ENCODE measurements at regions of chr17 and their contacts with region 1.

Region 1: DNA sequence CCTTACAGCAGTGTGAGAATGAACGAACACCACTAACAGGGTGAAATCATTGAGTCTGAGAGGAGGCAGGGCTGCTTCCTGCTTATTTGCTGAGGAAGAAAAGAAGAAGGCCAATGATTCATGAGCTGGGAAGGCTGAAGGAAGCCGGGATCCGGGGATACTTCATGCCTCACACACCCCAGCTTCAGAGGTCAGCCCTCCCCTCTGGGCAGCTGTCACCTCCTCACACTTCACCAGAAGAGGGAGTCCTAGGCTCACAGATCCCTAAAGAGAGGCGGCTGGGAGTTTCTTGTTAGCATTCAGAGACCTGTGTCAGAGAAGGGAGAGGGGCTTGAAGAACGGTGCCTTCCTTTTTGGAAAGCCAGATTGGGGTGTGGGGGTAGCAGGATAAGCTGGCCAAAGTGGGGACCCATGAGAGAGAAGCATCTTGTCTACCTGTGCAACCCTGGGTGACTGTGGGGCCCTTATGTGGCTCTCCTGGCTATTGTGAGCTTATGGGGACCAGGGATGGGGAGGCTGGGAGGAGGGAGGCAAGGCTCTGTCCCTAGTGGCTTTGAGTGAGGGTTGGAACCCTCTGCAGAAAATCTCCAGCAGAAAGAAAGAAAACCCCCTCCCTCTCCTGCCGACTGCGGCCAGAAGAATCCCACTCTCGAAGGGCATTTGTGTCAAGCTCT is 94.6 kb downstream of the RGS9 start:
- ATAC-seq: peak; percentile 70 to 92 (median 81)
- H3K4me3 ChIP-seq: no peak overlapping the region
- H3K27ac ChIP-seq: no peak overlapping the region
- H3K4me1 ChIP-seq: peaks cover 10 to 12% of the 10 kb centered on the region in 2 donors

Region 2: DNA sequence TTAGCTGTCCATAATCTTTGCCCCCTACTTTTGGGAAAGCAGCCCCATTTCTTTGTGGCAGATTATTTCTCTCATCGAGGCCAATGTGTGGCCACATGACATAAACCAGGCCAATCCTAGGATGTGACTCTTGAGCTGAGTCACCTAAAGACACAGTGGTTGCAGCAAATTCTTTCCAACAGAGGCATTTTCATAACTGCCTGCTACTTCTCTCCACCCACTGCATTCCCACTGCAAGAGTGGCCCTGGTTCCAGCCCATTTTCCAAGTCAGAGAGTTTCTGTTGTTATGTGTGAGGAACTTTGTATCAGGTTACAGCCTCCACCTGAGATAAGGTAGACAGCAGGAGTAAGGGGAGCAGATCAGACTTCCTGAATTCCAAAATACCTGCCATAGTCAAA is 100.6 kb after region 1 on chr17:
- in situ Hi-C with region 1: no loop called
- ATAC-seq: peak in 2 of 8 experiments; percentile 68 to 78
- H3K4me3 ChIP-seq: no peak overlapping the region
- H3K27ac ChIP-seq: no peak overlapping the region
- H3K4me1 ChIP-seq: no peaks in the 10 kb centered on the region

Region 3: DNA sequence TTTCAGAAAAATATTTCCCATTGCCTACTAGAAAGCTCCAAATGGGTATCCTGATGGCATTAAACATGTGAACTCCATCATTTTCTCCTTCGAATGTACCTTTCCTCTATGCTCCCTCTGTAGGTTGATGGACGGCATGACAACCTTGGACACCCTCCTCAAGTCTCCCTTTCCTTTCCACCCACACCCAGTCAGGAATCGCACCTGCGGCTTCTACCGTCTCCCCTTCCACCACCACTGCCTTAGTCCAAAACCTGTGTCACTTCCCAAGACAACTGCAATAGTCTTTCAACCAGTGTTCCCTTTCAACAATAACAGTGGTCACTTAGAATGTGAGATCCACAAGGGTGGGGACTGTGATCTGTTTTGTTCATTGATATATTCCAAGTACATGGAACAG is 562.8 kb after region 1 on chr17:
- in situ Hi-C with region 1: loop called in 1 of 9 experiments (anchors 25 kb)
- ATAC-seq: peak in 2 of 8 experiments; percentile 26 to 41
- H3K4me3 ChIP-seq: no peak overlapping the region
- H3K27ac ChIP-seq: no peak overlapping the region
- H3K4me1 ChIP-seq: peaks cover 0 to 5% of the 10 kb centered on the region in 2 donors

Region 4: DNA sequence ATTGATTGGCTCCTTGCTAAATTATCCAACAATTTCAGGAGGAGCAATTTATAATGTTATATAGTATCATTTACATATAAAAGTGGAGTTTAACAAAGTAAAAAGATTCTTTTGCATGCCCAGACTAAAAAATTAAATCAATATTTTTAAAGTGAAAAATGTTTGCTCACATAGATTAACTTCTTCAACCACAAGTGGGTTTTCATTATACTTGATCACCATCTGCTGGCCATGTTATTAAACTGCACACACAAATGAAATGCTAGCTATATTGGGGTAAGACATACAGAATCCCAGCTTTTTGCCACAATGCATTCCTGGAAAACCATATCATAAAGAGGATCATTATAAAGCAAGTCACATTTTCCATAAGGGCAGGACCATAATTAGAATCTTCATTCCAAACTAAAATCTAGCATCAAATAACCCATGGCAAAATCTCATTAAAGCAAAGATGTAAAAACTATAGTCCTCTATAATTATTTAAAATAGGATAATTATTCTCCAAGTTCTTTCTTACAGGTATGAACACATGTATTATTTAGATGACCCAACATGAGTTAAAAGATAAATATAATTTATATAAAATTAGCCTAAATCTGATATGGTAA is 933.8 kb after region 1 on chr17:
- in situ Hi-C with region 1: loop called in 2 of 9 experiments (anchors 25 kb)
- ATAC-seq: peak in 3 of 8 experiments; percentile 32 to 44 (median 38)
- H3K4me3 ChIP-seq: no peak overlapping the region
- H3K27ac ChIP-seq: no peak overlapping the region
- H3K4me1 ChIP-seq: no peaks in the 10 kb centered on the region

Measured in motor neuron (in vitro differentiated cells).